Vagina (tissue), 2 donors: ENCODE measurements at regions of chr13 and their contacts with region 1.

Region 1: DNA sequence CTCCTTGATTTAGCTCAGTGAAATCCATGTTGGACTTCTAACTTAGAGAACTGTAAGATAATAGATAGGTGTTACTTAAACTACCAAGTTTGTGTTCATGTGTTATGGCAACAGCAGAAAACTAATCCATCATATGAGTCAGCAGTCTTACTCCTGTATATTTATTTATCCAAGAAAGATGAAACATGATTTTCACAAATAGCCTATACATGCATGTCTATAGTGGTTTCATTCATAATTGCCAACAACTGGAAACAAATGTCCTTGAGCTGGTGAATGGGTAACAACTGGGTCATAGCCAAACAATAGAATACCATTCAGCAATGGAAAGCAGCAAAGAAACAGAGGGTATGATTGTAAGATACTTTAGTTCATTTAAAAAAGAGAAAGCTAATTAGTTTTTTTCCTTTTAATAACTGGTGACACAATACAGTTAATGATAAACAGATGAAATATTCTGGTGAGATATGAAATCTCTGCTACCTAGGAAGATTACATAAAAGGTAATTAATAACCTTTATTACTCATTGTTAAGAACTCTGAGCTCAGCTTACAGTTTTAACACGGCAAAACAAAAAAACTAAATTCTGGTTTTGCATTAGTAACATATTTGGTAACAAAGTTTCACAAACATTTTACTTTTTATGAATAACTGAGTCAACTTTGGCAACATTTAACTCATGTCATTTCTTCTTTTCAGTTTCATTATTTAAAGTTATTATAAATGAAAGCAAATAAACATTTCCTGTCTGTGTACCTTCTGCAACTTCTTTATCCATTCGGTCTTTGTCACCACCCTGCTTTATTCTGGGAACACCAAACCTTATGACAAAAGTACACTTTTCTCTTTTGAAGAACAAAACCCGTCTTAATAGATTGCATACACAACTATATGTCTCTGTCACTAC is 181.3 kb downstream of the LIG4 start:
- DNase-seq: no peak
- H3K4me3 ChIP-seq: no peak overlapping the region
- H3K27ac ChIP-seq: no peak overlapping the region
- H3K4me1 ChIP-seq: no peaks in the 10 kb centered on the region
- H3K27me3 ChIP-seq: no peaks in the 10 kb centered on the region
- CTCF ChIP-seq: no peak
- POLR2A ChIP-seq: no peak

Region 2: GRCh38 chr13:107977071-107977574 is 56.9 kb before region 1 on chr13:
- intact Hi-C with region 1: loop called (anchors 2 kb)
- DNase-seq: no peak
- H3K4me3 ChIP-seq: no peak overlapping the region
- H3K27ac ChIP-seq: no peak overlapping the region
- H3K4me1 ChIP-seq: no peaks in the 10 kb centered on the region
- H3K27me3 ChIP-seq: no peaks in the 10 kb centered on the region
- CTCF ChIP-seq: no peak
- POLR2A ChIP-seq: no peak